ENCODE measurements at regions of chr12 and their contacts with region 1.

Region 1: GRCh38 chr12:49687941-49688340 is 19.3 kb downstream of the FMNL3 start:
- DNase-seq: no peak
- H3K4me3 Mint-ChIP-seq: no peak overlapping the region
- H3K27ac Mint-ChIP-seq: no peak overlapping the region
- H3K4me1 Mint-ChIP-seq: peaks cover 55% of the 10 kb centered on the region
- H3K27me3 Mint-ChIP-seq: no peaks in the 10 kb centered on the region

Region 2: DNA sequence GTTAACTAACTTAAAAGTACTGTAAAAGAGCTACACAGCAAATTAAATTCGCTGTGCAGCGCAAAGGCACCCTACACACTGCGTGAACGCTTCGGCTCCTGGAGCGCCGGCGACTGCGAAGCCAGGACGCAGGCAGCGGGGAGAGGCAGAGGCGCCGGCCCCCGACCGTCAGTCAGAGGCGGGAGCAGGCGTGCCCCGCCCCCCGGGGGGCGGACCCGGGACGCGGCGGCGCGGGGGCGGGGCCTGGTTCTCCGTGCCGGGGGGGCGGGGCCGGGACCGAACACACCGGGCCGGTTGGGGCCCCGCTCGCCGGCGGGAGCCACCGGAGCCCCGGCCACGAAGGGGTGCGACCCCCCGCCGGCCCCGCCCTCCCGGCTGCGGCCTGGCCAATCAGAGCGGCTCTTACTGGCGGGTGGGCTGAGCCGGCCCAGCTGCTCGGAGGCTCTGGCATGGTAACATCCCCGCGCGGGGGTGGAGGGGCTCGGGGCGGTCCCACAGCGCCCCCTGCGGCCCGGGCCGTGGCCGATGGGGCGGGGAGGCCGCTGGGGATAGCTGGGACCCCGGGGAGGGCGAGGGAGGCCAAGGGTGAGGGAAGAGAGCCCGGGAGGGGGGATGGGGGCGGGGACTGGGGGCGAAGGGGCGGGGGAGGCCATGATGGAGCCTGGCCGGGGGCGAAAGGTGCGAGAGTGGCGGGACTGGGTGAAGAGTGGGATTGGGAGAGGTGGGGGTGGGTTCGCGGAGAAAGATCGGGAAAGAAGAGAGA is 64.6 kb before region 1 on chr12 and contains the start of gene PRPF40B:
- CTCF ChIA-PET with region 1: no interaction called
- intact Hi-C with region 1: no loop called
- DNase-seq: peak; percentile 85
- H3K4me3 Mint-ChIP-seq: peak within 1 kb of the TSS; percentile 79
- H3K27ac Mint-ChIP-seq: peak within 1 kb of the TSS; percentile 76
- H3K4me1 Mint-ChIP-seq: peaks cover 20% of the 10 kb centered on the region
- H3K27me3 Mint-ChIP-seq: peaks cover 12% of the 10 kb centered on the region
- total RNA-seq, gene PRPF40B: 7.2 to 7.7 TPM

Region 3: DNA sequence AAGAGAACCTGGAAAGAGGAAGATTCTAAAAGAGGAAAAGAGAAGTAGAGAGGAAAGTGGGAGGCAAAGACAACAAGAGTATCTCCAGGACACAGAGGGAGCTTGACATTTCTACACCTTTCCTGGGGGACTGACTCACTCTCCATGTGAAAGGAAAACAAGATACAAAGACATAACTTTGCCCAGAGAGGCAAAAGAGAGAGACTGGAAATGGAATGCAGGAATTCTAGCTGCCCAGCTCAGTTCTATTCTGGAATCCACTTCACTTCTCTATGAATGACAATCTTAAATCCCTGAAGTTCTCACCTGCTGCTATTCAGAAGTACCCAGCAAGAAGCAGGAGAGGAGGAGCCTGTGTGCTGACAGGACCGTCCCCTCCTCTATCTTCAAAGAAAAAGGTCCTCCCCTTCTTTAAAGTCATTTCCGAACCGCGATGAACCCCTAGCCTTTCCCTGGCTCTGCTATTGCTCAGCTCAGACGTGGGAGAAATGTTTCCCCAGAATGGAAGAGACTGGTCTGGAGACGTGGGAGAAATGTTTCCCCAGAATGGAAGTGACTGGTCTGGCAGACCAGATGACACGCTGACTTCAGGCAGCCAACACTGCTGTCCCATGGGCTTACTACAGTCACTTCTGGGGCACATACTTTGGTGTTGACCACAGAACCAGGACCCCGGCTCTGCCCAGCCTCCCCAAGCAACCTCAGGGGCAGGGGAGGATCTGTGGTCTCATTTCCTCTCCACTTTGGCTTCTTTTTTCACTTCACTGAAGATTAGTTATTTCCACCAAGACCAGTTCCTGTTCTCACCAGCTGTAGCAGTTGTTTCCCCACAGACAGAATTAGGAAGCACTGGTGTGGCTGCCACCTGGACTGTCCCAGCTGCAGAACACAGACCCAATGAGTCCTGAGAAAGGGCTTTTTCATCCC is 10.9 kb after region 1 on chr12:
- CTCF ChIA-PET with region 1: interaction called, 6 read pairs
- intact Hi-C with region 1: loop called (anchors 1 kb)
- DNase-seq: peak; percentile 68
- H3K4me3 Mint-ChIP-seq: peak overlapping the region; percentile 63
- H3K27ac Mint-ChIP-seq: peak overlapping the region; percentile 87
- H3K4me1 Mint-ChIP-seq: peaks cover 54% of the 10 kb centered on the region
- H3K27me3 Mint-ChIP-seq: no peaks in the 10 kb centered on the region